Motor neuron (in vitro differentiated cells): ENCODE measurements at regions of chr10 and their contacts with region 1.

Region 1: GRCh38 chr10:58590152-58590840 is 77.6 kb downstream of the BICC1 start:
- ATAC-seq: peak in 2 of 8 experiments; percentile 70 to 73
- H3K4me3 ChIP-seq: no peak overlapping the region
- H3K27ac ChIP-seq: no peak overlapping the region
- H3K4me1 ChIP-seq: no peaks in the 10 kb centered on the region

Region 2: GRCh38 chr10:58698777-58699356 is 108.6 kb after region 1 on chr10:
- in situ Hi-C with region 1: loop called in 1 of 9 experiments (anchors 25 kb)
- ATAC-seq: peak in 2 of 8 experiments; percentile 21 to 72
- H3K4me3 ChIP-seq: no peak overlapping the region
- H3K27ac ChIP-seq: no peak overlapping the region
- H3K4me1 ChIP-seq: peaks cover 0 to 10% of the 10 kb centered on the region in 2 donors

Region 3: DNA sequence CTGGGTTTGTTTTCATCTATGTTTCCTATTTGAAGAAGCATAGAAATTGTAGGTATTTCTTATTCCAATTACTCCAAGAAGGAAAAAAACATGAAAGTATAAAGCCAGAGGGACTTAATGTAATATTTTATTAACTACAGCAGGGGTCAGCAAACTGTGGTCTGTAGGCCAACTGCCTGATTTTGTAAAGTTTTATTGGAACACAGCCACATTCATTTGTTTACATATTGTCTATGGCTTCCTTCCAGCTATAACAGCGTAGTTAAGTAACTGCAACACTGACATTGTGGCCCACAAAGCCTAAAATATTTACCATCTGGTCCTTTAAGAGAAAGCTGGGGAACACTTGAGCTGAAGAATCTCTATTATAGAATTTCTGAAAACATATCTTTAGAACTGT is 228.6 kb after region 1 on chr10:
- in situ Hi-C with region 1: no loop called
- ATAC-seq: no peak
- H3K4me3 ChIP-seq: no peak overlapping the region
- H3K27ac ChIP-seq: no peak overlapping the region
- H3K4me1 ChIP-seq: peaks cover 44 to 45% of the 10 kb centered on the region in 2 donors